Aorta (tissue), 5 donors: ENCODE measurements at regions of chr11 and their contacts with region 1.

Region 1: GRCh38 chr11:128467610-128468041 is 119.7 kb downstream of the ETS1 start:
- DNase-seq: peak; percentile 77 to 83
- ATAC-seq: peak; percentile 81
- H3K4me3 ChIP-seq: no peak overlapping the region
- H3K27ac ChIP-seq: peak overlapping the region in 1 of 2 donors; percentile 70
- H3K4me1 ChIP-seq: peaks cover 3 to 14% of the 10 kb centered on the region in 2 donors
- H3K27me3 ChIP-seq: no peaks in the 10 kb centered on the region

Region 2: DNA sequence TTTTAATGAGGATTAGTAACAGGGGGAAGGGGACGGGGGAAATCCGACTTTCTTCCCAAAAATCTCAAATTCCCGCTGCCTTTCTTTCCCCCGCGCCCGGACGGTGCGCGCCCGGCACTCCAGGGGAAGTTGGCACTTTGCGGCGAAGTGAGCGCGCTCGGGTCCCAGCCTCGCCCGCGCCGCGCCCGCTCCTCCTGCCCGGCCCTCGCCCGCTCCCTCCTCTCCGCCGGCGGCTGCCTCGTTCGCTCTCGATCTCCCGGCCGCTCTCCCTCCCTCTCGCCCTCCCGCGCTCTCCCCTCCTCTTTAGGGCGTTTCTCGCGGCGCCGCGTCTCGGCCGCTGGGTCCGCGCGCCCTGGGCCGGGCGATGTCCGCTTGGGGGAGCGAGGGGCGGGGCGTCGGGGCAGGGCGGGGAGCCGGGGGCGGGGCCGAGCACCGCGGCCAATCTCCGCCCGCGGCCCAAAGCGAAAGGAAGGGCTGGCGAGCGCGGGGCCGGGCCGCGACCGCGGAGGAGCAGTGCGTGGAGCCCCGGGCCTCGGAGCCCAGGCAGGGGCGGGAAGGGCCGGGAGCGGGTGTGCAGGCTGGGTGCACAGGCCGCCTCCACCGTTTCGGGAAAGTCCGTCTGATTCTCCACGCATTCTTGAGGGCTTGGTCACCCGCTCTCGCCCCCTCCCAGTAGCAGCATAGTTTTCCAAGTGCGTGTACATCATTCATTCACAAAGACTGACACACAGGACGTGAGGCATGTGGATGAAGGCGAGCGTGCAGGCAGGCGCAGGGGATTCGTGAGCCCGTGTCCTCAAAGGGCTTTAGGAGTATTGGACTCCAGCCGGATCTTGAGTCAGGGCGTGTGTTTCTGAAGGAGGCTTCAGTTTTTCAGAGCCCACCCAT is 54.7 kb after region 1 on chr11:
- intact Hi-C with region 1: loop called (anchors 1 to 5 kb)
- DNase-seq: peak; percentile 96 to 97
- ATAC-seq: peak; percentile 97
- H3K4me3 ChIP-seq: peak overlapping the region; percentile 82 to 91
- H3K27ac ChIP-seq: peak overlapping the region; percentile 71 to 97
- H3K4me1 ChIP-seq: peaks cover 0 to 2% of the 10 kb centered on the region in 2 donors
- H3K27me3 ChIP-seq: no peaks in the 10 kb centered on the region

Region 3: DNA sequence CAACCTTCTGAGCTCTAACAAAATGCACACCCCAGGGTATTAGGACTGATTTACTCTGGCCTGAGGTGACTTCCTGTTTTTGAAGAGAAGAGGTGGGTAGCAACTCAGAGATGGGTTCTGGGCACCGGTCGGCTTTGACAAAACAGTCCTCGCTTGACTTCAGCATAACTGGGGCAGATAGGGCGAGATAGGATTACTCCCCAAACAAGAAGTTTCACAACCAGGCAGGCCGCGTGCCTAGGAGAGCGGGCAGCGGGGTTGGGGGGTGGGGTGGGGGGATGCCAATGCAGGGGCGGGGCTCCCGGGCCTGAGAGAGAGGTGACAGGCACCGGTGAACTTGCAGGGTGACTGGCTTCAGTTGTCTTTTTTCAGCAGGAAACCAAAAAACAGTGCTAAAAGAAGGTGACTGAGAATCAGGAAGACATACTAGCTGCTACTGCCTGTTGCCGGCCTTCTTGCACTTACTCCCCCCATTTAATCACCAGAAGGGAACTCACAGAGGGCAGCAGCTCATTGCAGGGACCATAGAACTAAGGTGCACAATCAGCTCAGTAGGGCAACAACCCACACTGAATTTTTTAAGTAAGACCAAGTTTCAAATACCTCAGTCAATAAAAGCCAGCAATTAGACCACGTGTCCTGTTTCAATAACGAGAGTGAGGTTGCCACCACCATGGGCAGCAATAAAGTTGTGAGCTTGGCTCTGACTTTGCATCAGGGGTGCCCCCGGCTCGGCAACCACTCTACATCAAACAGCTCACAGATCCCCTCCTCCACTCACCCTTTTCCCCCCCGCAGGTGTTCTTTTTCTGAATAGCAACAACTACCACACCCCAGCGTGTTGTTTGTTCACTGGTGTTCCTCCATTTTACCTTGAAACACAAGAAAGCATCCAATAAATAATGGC is 156.9 kb after region 1 on chr11:
- intact Hi-C with region 1: loop called in 1 of 2 experiments (anchors 5 kb)
- DNase-seq: peak in 1 of 2 donors; percentile 46
- ATAC-seq: no peak
- H3K4me3 ChIP-seq: no peak overlapping the region
- H3K27ac ChIP-seq: no peak overlapping the region
- H3K4me1 ChIP-seq: no peaks in the 10 kb centered on the region
- H3K27me3 ChIP-seq: no peaks in the 10 kb centered on the region